Left lung (tissue), 14 donors: ENCODE measurements at regions of chr9 and their contacts with region 1.

Region 1: GRCh38 chr9:115013998-115014397 is 83.6 kb upstream of the TNFSF8 start:
- DNase-seq: peak; percentile 69 to 87 (median 77)
- ATAC-seq: peak; percentile 92
- H3K4me3 ChIP-seq: no peak overlapping the region
- H3K27ac ChIP-seq: no peak overlapping the region
- H3K4me1 ChIP-seq: peaks cover 0 to 10% of the 10 kb centered on the region in 2 donors
- H3K27me3 ChIP-seq: no peaks in the 10 kb centered on the region
- CTCF ChIP-seq: peak; percentile 72 to 74

Region 2: GRCh38 chr9:114681594-114682332 is 332.2 kb before region 1 on chr9 and contains the start of gene TEX48:
- intact Hi-C with region 1: loop called in 1 of 2 experiments (anchors 10 kb)
- DNase-seq: peak in 3 of 4 donors; percentile 19 to 67 (median 66)
- ATAC-seq: peak; percentile 95
- H3K4me3 ChIP-seq: no peak within 1 kb of the TSS
- H3K27ac ChIP-seq: no peak within 1 kb of the TSS
- H3K4me1 ChIP-seq: peaks cover 0 to 4% of the 10 kb centered on the region in 2 donors
- H3K27me3 ChIP-seq: no peaks in the 10 kb centered on the region
- CTCF ChIP-seq: peak; percentile 44 to 63
- polyA plus RNA-seq, gene TEX48: 0.35 to 0.41 TPM in 2 of 6 donors, not detected in the others

Region 3: GRCh38 chr9:114738581-114739316 is 275.2 kb before region 1 on chr9:
- intact Hi-C with region 1: loop called in 1 of 2 experiments (anchors 5 kb)
- DNase-seq: peak; percentile 53 to 76 (median 76)
- ATAC-seq: peak; percentile 100
- H3K4me3 ChIP-seq: no peak overlapping the region
- H3K27ac ChIP-seq: no peak overlapping the region
- H3K4me1 ChIP-seq: peaks cover 0 to 7% of the 10 kb centered on the region in 2 donors
- H3K27me3 ChIP-seq: no peaks in the 10 kb centered on the region
- CTCF ChIP-seq: peak; percentile 83 to 84

Region 4: GRCh38 chr9:115395511-115396021 is 381.6 kb after region 1 on chr9:
- intact Hi-C with region 1: no loop called
- DNase-seq: peak in 1 of 4 donors; percentile 18
- ATAC-seq: peak; percentile 56
- H3K4me3 ChIP-seq: no peak overlapping the region
- H3K27ac ChIP-seq: no peak overlapping the region
- H3K4me1 ChIP-seq: peaks cover 0 to 3% of the 10 kb centered on the region in 2 donors
- H3K27me3 ChIP-seq: no peaks in the 10 kb centered on the region
- CTCF ChIP-seq: no peak